ENCODE measurements at regions of chr5 and their contacts with region 1.

Region 1: GRCh38 chr5:154753792-154754191 is 1.4 kb upstream of the LARP1 start:
- DNase-seq: peak in 1 of 2 donors; percentile 86
- H3K4me3 ChIP-seq: peak overlapping the region in 2 of 3 donors; percentile 82 to 98
- H3K27ac ChIP-seq: peak overlapping the region; percentile 97 to 98
- H3K4me1 ChIP-seq: peaks cover 3 to 13% of the 10 kb centered on the region in 2 donors
- H3K27me3 ChIP-seq: no peaks in the 10 kb centered on the region
- CTCF ChIP-seq: no peak
- POLR2A ChIP-seq: no peak

Region 2: GRCh38 chr5:154683101-154683880 is 70.5 kb before region 1 on chr5:
- intact Hi-C with region 1: loop called (anchors 2 kb)
- DNase-seq: peak in 1 of 2 donors; percentile 24
- H3K4me3 ChIP-seq: peak overlapping the region; percentile 40 to 76 (median 59)
- H3K27ac ChIP-seq: peak overlapping the region; percentile 85
- H3K4me1 ChIP-seq: no peaks in the 10 kb centered on the region
- H3K27me3 ChIP-seq: no peaks in the 10 kb centered on the region
- CTCF ChIP-seq: no peak
- POLR2A ChIP-seq: no peak

Region 3: GRCh38 chr5:155270725-155271124 is 516.9 kb after region 1 on chr5:
- intact Hi-C with region 1: no loop called
- DNase-seq: no peak
- H3K4me3 ChIP-seq: no peak overlapping the region
- H3K27ac ChIP-seq: no peak overlapping the region
- H3K4me1 ChIP-seq: no peaks in the 10 kb centered on the region
- H3K27me3 ChIP-seq: no peaks in the 10 kb centered on the region
- CTCF ChIP-seq: no peak
- POLR2A ChIP-seq: no peak

Region 4: DNA sequence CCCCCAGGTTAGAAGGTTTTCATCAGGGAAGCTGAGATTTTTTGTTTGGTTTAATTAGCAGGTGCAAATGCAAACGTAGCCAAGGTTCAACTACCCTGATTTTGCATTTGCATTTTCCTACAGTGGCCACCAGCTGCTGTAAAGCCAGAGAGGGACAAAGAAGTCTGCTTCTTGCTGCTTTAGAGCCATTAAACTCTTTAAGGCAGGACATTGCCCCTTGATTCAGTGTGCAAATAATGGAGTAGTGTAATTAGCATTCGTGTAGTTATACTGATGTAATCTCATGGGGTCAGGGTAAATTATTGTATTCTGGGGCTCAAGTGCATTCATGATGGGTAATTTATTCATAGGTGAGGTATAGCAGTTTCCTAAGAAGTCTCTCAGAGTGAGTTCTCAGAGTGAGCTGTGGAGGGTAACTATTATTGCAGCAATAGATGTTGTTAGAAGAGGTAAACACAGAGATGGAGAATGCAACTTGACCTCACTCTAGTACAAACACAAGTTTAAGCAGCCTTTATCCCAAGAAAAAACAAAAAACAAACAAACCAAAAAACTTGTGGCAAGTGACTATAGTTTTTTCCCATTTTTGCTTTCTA is 786.3 kb after region 1 on chr5:
- intact Hi-C with region 1: no loop called
- DNase-seq: no peak
- H3K4me3 ChIP-seq: no peak overlapping the region
- H3K27ac ChIP-seq: no peak overlapping the region
- H3K4me1 ChIP-seq: no peaks in the 10 kb centered on the region
- H3K27me3 ChIP-seq: no peaks in the 10 kb centered on the region
- CTCF ChIP-seq: no peak
- POLR2A ChIP-seq: no peak